ENCODE measurements at regions of chr12 and their contacts with region 1.

Region 1: GRCh38 chr12:6662906-6663742 is at the start of gene ING4:
- DNase-seq: peak; percentile 98
- H3K4me3 ChIP-seq: peak within 1 kb of the TSS; percentile 23 to 72 (median 54)
- H3K27ac ChIP-seq: peak within 1 kb of the TSS; percentile 77 to 88 (median 84)
- H3K4me1 ChIP-seq: peaks cover 8 to 14% (median 9%) of the 10 kb centered on the region in 4 donors
- H3K27me3 ChIP-seq: no peaks in the 10 kb centered on the region
- CTCF ChIP-seq: peak in 1 of 5 experiments; percentile 29
- EP300 ChIP-seq: peak; percentile 25
- POLR2A ChIP-seq: peak; percentile 46
- total RNA-seq, gene ING4: 41.8 to 165 (median 56.6) TPM

Region 2: GRCh38 chr12:6613776-6614512 is 49.2 kb before region 1 on chr12:
- in situ Hi-C with region 1: no loop called
- intact Hi-C with region 1: loop called (anchors 10 kb)
- DNase-seq: peak; percentile 90
- H3K4me3 ChIP-seq: peak overlapping the region in 1 of 4 donors; percentile 15
- H3K27ac ChIP-seq: peak overlapping the region; percentile 90 to 97 (median 92)
- H3K4me1 ChIP-seq: peaks cover 27 to 42% (median 29%) of the 10 kb centered on the region in 4 donors
- H3K27me3 ChIP-seq: no peaks in the 10 kb centered on the region
- CTCF ChIP-seq: peak in 1 of 5 experiments; percentile 1
- EP300 ChIP-seq: no peak
- POLR2A ChIP-seq: peak; percentile 60